CD8-positive, alpha-beta T cell (primary cell): ENCODE measurements at regions of chr11 and their contacts with region 1.

Region 1: DNA sequence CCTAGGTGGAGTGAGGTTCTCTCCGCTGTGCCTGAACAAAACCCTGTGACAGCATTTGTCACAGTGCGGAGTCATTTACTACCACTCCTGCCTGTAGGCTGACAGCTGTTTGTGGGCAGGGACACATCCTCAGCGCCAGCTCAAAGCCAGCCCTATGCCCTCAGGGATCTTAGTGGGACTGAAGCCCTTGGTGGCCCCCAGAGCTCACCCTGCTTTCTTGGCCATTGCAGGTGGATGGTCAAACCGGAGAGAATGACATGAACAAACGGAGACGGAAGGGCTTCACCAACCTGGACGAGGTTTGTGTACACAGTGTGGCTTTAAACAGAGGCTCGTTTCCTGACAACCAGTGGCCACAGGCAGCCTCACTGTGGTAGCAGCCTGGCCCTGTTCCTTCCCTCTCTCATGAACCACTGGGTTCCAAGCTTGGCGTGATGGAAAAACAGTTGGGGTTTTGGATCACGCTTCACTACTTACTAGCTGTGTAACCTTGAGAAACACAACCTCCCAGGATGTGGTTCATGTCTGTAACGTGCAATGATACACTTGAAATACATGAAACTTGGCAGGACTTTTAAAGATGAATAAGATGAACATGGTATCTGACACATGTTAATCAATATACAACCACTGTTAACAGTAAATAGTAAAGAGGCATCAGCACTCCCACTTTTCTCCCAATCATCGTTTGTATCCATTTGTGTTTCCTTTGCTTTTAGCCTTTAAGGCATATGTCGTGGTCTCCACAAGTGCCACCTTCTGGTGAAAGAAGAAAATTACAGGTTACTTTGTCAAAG is 125.8 kb downstream of the MICAL2 start:
- DNase-seq: peak in 7 of 9 experiments; percentile 25 to 83 (median 60)
- ATAC-seq: peak; percentile 80
- H3K4me3 ChIP-seq: peak overlapping the region in 1 of 2 experiments; percentile 18
- H3K4me3 Mint-ChIP-seq: peak overlapping the region; percentile 49
- H3K27ac ChIP-seq: peak overlapping the region; percentile 38 to 69
- H3K27ac Mint-ChIP-seq: peak overlapping the region; percentile 92
- H3K4me1 ChIP-seq: peaks cover 14% of the 10 kb centered on the region
- H3K4me1 Mint-ChIP-seq: peaks cover 18% of the 10 kb centered on the region
- H3K27me3 ChIP-seq: no peaks in the 10 kb centered on the region
- H3K27me3 Mint-ChIP-seq: no peaks in the 10 kb centered on the region
- CTCF ChIP-seq: peak; percentile 74

Region 2: GRCh38 chr11:12052676-12053605 is 183.2 kb before region 1 on chr11:
- CTCF ChIA-PET with region 1: interaction called, 122 read pairs
- POLR2A ChIA-PET with region 1: interaction called, 3 read pairs
- intact Hi-C with region 1: no loop called
- DNase-seq: peak in 4 of 9 experiments; percentile 28 to 48 (median 38)
- ATAC-seq: no peak
- H3K4me3 ChIP-seq: no peak overlapping the region
- H3K4me3 Mint-ChIP-seq: no peak overlapping the region
- H3K27ac ChIP-seq: no peak overlapping the region
- H3K27ac Mint-ChIP-seq: no peak overlapping the region
- H3K4me1 ChIP-seq: no peaks in the 10 kb centered on the region
- H3K4me1 Mint-ChIP-seq: no peaks in the 10 kb centered on the region
- H3K27me3 ChIP-seq: no peaks in the 10 kb centered on the region
- H3K27me3 Mint-ChIP-seq: no peaks in the 10 kb centered on the region
- CTCF ChIP-seq: no peak

Region 3: GRCh38 chr11:12087075-12088004 is 148.8 kb before region 1 on chr11:
- CTCF ChIA-PET with region 1: interaction called, 18 read pairs
- POLR2A ChIA-PET with region 1: no interaction called
- intact Hi-C with region 1: loop called in 1 of 2 experiments (anchors 1 kb)
- DNase-seq: peak in 7 of 9 experiments; percentile 19 to 83 (median 54)
- ATAC-seq: peak; percentile 89
- H3K4me3 ChIP-seq: peak overlapping the region in 1 of 2 experiments; percentile 20
- H3K4me3 Mint-ChIP-seq: peak overlapping the region; percentile 30
- H3K27ac ChIP-seq: peak overlapping the region in 1 of 2 experiments; percentile 52
- H3K27ac Mint-ChIP-seq: peak overlapping the region; percentile 84
- H3K4me1 ChIP-seq: peaks cover 55% of the 10 kb centered on the region
- H3K4me1 Mint-ChIP-seq: peaks cover 71% of the 10 kb centered on the region
- H3K27me3 ChIP-seq: no peaks in the 10 kb centered on the region
- H3K27me3 Mint-ChIP-seq: no peaks in the 10 kb centered on the region
- CTCF ChIP-seq: no peak

Region 4: DNA sequence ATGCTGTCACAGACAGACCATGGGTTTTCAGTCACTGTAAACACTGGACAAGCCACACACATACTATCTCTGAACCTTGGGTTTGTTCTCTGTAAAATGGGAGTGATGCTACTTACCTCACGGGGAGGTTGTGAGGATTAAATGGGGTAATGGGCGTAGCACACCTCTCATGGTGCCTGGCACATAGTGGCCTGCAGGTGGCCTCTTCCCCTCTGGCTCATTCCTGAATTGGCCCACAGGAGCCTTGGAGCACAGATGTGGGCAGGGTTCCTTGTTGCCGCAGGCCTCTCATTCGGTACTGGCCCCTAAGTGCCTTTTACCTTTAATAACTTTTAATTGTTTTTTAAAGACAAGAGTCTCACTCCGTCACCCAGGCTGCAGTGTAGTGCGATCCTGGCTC is 114.1 kb before region 1 on chr11:
- CTCF ChIA-PET with region 1: interaction called, 8 read pairs
- POLR2A ChIA-PET with region 1: no interaction called
- intact Hi-C with region 1: loop called in 1 of 2 experiments (anchors 2 kb)
- DNase-seq: peak in 2 of 9 experiments; percentile 12 to 22
- ATAC-seq: no peak
- H3K4me3 ChIP-seq: no peak overlapping the region
- H3K4me3 Mint-ChIP-seq: no peak overlapping the region
- H3K27ac ChIP-seq: no peak overlapping the region
- H3K27ac Mint-ChIP-seq: no peak overlapping the region
- H3K4me1 ChIP-seq: peaks cover 5% of the 10 kb centered on the region
- H3K4me1 Mint-ChIP-seq: peaks cover 20% of the 10 kb centered on the region
- H3K27me3 ChIP-seq: no peaks in the 10 kb centered on the region
- H3K27me3 Mint-ChIP-seq: no peaks in the 10 kb centered on the region
- CTCF ChIP-seq: no peak

Region 5: GRCh38 chr11:12159351-12160099 is 76.6 kb before region 1 on chr11:
- CTCF ChIA-PET with region 1: interaction called, 11 read pairs
- POLR2A ChIA-PET with region 1: no interaction called
- intact Hi-C with region 1: loop called in 1 of 2 experiments (anchors 2 kb)
- DNase-seq: no peak
- ATAC-seq: no peak
- H3K4me3 ChIP-seq: no peak overlapping the region
- H3K4me3 Mint-ChIP-seq: no peak overlapping the region
- H3K27ac ChIP-seq: no peak overlapping the region
- H3K27ac Mint-ChIP-seq: no peak overlapping the region
- H3K4me1 ChIP-seq: peaks cover 11% of the 10 kb centered on the region
- H3K4me1 Mint-ChIP-seq: peaks cover 18% of the 10 kb centered on the region
- H3K27me3 ChIP-seq: no peaks in the 10 kb centered on the region
- H3K27me3 Mint-ChIP-seq: no peaks in the 10 kb centered on the region
- CTCF ChIP-seq: no peak

Region 6: GRCh38 chr11:12216671-12217374 is 19.3 kb before region 1 on chr11:
- CTCF ChIA-PET with region 1: interaction called, 14 read pairs
- POLR2A ChIA-PET with region 1: no interaction called
- intact Hi-C with region 1: no loop called
- DNase-seq: no peak
- ATAC-seq: peak; percentile 10
- H3K4me3 ChIP-seq: no peak overlapping the region
- H3K4me3 Mint-ChIP-seq: no peak overlapping the region
- H3K27ac ChIP-seq: peak overlapping the region in 1 of 2 experiments; percentile 17
- H3K27ac Mint-ChIP-seq: peak overlapping the region; percentile 78
- H3K4me1 ChIP-seq: peaks cover 18% of the 10 kb centered on the region
- H3K4me1 Mint-ChIP-seq: peaks cover 35% of the 10 kb centered on the region
- H3K27me3 ChIP-seq: no peaks in the 10 kb centered on the region
- H3K27me3 Mint-ChIP-seq: no peaks in the 10 kb centered on the region
- CTCF ChIP-seq: no peak

Region 7: DNA sequence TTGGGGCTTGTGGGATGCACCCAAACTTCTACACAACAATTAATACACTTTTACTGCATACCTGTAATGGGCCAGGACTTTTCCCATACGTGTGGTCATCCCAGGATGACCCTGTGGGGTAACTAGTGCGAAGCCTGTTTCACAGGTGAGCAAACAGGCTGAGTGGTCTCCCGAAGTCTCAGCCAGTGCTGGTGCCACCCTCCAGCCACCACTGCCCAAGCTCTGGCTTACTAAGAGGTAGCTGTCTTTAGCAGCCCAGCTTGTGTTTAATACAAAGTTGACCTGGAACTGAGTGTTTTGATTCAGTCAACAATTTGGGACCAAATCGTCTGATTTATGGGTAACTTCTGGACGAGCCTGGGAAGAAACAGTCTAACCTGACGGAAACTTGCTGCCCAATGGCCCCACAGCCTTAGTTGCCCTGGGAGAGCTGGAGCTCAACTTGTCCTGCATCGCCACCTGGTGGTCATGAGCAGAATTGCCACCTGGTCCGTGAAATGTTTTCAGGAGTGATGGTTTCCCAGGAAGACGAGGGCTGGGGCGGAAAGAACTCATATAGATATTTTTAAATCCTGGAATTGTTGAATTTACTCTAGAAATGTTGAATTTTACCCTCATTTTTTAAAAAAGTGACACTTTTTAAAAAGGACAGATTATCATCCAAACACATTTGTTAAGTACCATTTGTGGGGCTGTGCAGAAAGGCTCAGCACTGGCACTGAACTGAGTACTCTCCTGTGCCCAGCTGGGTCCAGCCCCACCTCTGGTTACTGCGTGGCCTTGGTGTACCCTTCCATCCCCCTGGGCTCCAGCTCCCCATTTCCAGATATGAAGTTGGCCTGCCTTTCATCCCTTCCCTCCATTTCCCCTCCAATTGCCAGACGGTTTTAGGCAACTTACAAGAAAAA is 45.7 kb after region 1 on chr11:
- CTCF ChIA-PET with region 1: interaction called, 69 read pairs
- POLR2A ChIA-PET with region 1: interaction called, 4 read pairs
- intact Hi-C with region 1: loop called (anchors 1 to 2 kb)
- DNase-seq: peak; percentile 53 to 87 (median 81)
- ATAC-seq: peak; percentile 64
- H3K4me3 ChIP-seq: no peak overlapping the region
- H3K4me3 Mint-ChIP-seq: no peak overlapping the region
- H3K27ac ChIP-seq: no peak overlapping the region
- H3K27ac Mint-ChIP-seq: no peak overlapping the region
- H3K4me1 ChIP-seq: no peaks in the 10 kb centered on the region
- H3K4me1 Mint-ChIP-seq: no peaks in the 10 kb centered on the region
- H3K27me3 ChIP-seq: no peaks in the 10 kb centered on the region
- H3K27me3 Mint-ChIP-seq: no peaks in the 10 kb centered on the region
- CTCF ChIP-seq: peak; percentile 92

Region 8: DNA sequence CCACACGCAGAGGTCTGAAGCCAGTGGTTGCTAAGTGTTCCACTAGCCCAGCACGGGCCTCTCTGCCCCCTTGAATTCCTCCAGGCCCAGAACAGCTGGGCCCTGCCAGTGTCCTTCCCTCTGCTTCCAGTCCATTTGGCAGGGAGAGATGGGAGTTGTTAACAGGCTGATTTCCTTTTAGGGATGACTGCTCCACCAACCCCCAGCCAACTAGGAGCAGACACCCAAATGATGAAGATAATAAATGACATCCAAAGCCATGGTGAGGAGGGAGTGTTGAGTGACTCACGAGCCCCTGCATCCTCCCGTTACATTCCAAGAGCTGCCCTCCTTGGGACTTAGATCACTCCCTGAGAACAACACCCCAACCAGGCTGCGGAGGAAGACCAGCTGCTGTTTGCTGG is 161.8 kb after region 1 on chr11:
- CTCF ChIA-PET with region 1: no interaction called
- POLR2A ChIA-PET with region 1: no interaction called
- intact Hi-C with region 1: no loop called
- DNase-seq: no peak
- ATAC-seq: no peak
- H3K4me3 ChIP-seq: no peak overlapping the region
- H3K4me3 Mint-ChIP-seq: no peak overlapping the region
- H3K27ac ChIP-seq: no peak overlapping the region
- H3K27ac Mint-ChIP-seq: no peak overlapping the region
- H3K4me1 ChIP-seq: no peaks in the 10 kb centered on the region
- H3K4me1 Mint-ChIP-seq: peaks cover 7% of the 10 kb centered on the region
- H3K27me3 ChIP-seq: no peaks in the 10 kb centered on the region
- H3K27me3 Mint-ChIP-seq: no peaks in the 10 kb centered on the region
- CTCF ChIP-seq: no peak